AG04449 (cell line): ENCODE measurements at regions of chr9 and their contacts with region 1.

Region 1: GRCh38 chr9:134778841-134779411 is 101.7 kb upstream of the FCN2 start:
- DNase-seq: no peak
- H3K4me3 ChIP-seq: no peak overlapping the region
- CTCF ChIP-seq: peak; percentile 59

Region 2: GRCh38 chr9:134469041-134469875 is 309.7 kb before region 1 on chr9:
- CTCF ChIA-PET with region 1: no interaction called
- POLR2A ChIA-PET with region 1: no interaction called
- DNase-seq: no peak
- H3K4me3 ChIP-seq: no peak overlapping the region
- CTCF ChIP-seq: no peak

Region 3: DNA sequence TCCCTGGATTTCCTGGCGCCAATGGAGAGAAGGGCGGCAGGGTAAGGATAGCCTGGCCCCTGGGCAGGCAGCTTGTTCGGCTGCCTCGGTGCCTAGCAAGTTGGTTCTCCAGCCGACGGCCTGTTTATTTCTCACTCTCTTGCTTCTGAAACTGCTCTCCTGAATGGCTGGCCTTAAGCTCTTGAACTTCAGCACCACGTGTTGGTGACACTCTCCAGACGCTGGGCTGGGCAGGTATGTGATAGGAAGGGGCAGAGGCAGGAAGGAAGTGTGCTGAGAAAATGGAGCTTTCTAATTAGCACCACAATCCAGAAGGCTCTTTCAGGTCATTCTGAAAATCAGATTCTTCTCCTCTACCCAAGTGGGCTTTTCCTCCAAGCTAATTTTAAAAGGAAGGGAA is 10.2 kb after region 1 on chr9:
- CTCF ChIA-PET with region 1: interaction called, 12 read pairs
- POLR2A ChIA-PET with region 1: interaction called, 3 read pairs
- DNase-seq: no peak
- H3K4me3 ChIP-seq: no peak overlapping the region
- CTCF ChIP-seq: no peak

Region 4: GRCh38 chr9:134800791-134801339 is 21.9 kb after region 1 on chr9:
- CTCF ChIA-PET with region 1: interaction called, 11 read pairs
- POLR2A ChIA-PET with region 1: interaction called, 3 read pairs
- DNase-seq: no peak
- H3K4me3 ChIP-seq: no peak overlapping the region
- CTCF ChIP-seq: no peak

Region 5: GRCh38 chr9:134891053-134891452 is 112.1 kb after region 1 on chr9:
- CTCF ChIA-PET with region 1: no interaction called
- POLR2A ChIA-PET with region 1: no interaction called
- DNase-seq: no peak
- H3K4me3 ChIP-seq: no peak overlapping the region
- CTCF ChIP-seq: no peak